Dorsolateral prefrontal cortex (tissue), 120 donors: ENCODE measurements at regions of chr21 and their contacts with region 1.

Region 1: DNA sequence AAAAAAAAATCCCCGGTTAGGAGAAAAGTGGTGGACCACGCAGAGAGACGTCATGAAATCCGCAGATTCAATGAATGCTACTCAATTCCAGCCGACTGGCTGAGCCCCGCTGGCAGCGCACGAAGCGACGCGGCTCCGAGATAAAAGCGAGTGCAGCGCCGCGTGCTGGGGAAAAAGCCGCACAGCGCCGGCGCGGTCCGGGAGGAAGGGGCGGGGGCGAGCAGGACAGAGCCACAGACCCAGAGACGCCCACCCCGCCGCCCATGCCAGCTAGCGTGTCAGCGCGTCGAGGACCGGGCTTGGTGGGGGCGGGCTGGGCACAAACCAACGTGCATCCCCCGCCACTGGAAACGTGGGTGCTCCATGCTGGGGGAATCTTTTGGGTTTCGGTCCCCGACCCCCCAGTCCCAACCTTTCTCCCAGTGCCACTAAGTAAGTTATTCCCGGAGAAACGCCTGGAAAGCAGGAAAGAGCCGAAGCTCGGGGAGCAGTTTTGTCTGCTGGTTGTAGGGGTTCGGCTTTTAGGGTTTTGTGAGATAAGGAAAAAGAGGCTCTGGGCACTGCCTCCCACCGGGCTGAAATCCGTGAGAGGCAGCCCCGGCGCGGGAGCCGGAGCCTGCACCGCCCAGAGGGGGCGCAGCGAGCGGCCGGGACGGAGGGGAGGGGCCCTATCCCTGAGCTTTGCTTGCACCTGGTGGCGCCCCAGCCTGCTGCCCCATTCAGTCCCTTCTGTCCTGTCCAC is at the start of gene KCNJ6:
- DNase-seq: peak in 7 of 10 donors; percentile 58 to 80 (median 73)
- H3K4me3 ChIP-seq: peak within 1 kb of the TSS; percentile 20 to 75 (median 59)
- H3K27ac ChIP-seq: peak within 1 kb of the TSS in 48 of 59 donors; percentile 6 to 87 (median 54)
- H3K27me3 ChIP-seq: peaks cover 0 to 56% (median 23%) of the 10 kb centered on the region in 45 donors
- CTCF ChIP-seq: peak in 52 of 56 donors; percentile 5 to 70 (median 54)
- total RNA-seq, gene KCNJ6: 7.0 to 48.8 (median 30.1) TPM

Region 2: GRCh38 chr21:37575580-37575979 is 340.9 kb before region 1 on chr21:
- intact Hi-C with region 1: loop called in 1 of 2 experiments (anchors 10 kb)
- DNase-seq: no peak
- H3K4me3 ChIP-seq: no peak overlapping the region
- H3K27ac ChIP-seq: no peak overlapping the region
- H3K27me3 ChIP-seq: no peaks in the 10 kb centered on the region
- CTCF ChIP-seq: no peak

Region 3: DNA sequence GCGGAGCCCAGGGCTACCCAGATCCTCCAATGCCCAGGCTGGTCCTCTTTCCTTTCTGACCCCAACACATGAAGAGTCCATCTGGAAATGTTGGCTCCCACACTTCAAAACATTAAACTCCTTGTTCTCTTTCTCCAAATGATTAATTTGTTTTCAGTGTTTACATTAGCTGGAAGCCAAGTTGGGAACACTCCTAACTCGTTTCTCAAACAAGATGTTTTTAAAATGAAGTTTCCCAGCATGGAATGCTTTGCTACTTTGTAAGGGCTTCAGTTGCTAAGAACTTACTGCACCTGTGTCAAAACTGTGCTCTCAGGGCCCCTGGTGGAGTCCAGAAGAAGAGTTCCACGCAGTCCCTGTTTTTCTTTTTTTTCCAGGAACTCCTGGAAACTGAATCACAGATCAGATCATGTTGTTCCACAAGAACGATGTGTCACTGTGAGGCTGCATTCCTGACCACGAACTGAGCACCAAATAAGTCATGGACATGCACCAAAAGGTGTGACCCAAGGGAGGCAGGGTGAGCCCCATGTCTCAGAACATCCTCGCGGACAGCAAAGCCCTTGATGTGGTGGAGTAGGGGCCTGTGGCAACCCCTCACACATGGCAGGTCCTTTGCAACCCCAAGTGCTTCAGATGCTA is 257.5 kb before region 1 on chr21:
- intact Hi-C with region 1: no loop called
- DNase-seq: peak in 1 of 10 donors; percentile 24
- H3K4me3 ChIP-seq: no peak overlapping the region
- H3K27ac ChIP-seq: peak overlapping the region in 53 of 59 donors; percentile 22 to 90 (median 73)
- H3K27me3 ChIP-seq: no peaks in the 10 kb centered on the region
- CTCF ChIP-seq: peak in 9 of 56 donors; percentile 9 to 39 (median 12)

Region 4: GRCh38 chr21:37711836-37712568 is 204.5 kb before region 1 on chr21:
- intact Hi-C with region 1: loop called in 1 of 2 experiments (anchors 10 kb)
- DNase-seq: peak in 8 of 10 donors; percentile 60 to 74 (median 68)
- H3K4me3 ChIP-seq: no peak overlapping the region
- H3K27ac ChIP-seq: peak overlapping the region in 4 of 59 donors; percentile 15 to 51 (median 30)
- H3K27me3 ChIP-seq: peaks cover 0 to 2% (median 0%) of the 10 kb centered on the region in 45 donors
- CTCF ChIP-seq: peak; percentile 44 to 88 (median 76)